Naive thymus-derived CD4-positive, alpha-beta T cell (primary cell): ENCODE measurements at regions of chr22 and their contacts with region 1.

Region 1: DNA sequence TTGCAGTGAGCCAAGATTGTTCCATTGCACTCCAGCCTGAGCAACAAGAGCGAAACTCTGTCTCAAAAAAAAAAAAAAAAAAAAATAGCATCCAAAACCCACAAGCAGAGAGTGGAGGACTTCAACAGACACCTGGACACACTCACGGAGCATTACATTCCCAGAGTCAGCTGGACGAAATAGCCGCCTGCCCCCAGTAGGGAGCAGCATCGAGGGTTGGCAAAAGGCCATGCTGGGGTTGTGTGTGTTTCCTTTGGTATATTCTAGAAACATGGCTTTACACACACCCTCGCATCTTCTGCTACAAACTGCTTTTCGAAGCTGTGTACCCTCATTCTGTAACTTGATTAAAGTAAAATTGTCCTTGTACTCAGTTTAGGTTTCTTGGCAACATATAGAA is 5.3 kb downstream of the ADA2 start:
- DNase-seq: peak; percentile 27 to 67 (median 51)
- ATAC-seq: peak; percentile 68
- H3K4me3 ChIP-seq: no peak overlapping the region
- H3K4me3 Mint-ChIP-seq: peak overlapping the region in 6 of 10 donors; percentile 6 to 89 (median 56)
- H3K27ac ChIP-seq: peak overlapping the region; percentile 44
- H3K27ac Mint-ChIP-seq: peak overlapping the region in 7 of 9 donors; percentile 67 to 100 (median 88)
- H3K4me1 ChIP-seq: peaks cover 9 to 15% of the 10 kb centered on the region in 2 donors
- H3K4me1 Mint-ChIP-seq: peaks cover 35 to 66% (median 48%) of the 10 kb centered on the region in 7 donors
- H3K27me3 ChIP-seq: no peaks in the 10 kb centered on the region
- H3K27me3 Mint-ChIP-seq: no peaks in the 10 kb centered on the region

Region 2: DNA sequence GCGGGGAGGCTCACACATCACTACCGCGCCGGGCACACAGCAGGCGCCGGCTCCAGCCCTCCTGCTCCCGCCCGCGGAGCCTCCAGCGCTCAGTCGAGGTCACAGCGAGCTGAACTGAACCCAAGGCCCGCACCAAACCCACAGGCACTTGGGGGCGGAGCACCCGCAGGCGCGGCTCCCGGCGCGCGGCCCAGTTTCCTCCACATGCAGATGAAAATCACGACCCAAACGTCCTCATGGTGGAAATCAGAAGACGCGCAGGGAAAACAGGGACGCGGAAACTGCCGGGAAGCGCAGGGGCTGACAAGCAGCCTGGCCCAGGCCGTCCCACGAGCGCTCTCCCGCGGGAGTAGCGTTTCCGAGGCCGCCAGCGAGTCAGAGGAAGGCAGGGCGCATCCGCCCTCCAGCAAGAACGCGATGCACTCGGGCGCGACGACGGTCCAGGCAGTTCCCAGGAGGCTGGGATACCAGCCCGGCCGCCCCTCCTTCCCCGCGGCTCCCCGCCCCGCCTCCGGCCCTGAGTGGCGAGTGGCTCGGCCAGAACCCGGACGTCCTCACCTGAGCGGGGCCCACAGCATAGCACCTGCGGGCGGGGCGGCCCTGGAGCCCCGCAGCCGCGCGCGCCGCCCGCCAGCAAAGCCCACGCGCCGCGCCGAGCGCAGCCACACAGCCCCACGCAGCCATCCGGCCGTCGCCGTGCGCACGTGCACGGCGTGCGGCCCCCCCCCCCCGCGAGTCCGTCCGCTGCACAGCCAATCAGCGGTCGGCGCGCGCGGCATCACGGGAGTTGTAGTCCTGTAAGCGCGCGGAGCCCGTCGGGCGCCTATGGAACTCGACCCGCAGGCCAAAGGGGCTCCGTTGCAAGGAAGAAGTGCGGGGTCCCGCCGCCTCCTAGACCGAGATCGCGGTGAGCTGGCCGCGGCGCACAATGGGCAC is 55.1 kb before region 1 on chr22 and contains the start of gene HDHD5:
- CTCF ChIA-PET with region 1: no interaction called
- POLR2A ChIA-PET with region 1: interaction called, 3 read pairs
- intact Hi-C with region 1: loop called in 1 of 2 experiments (anchors 5 kb)
- DNase-seq: peak; percentile 71 to 87 (median 84)
- ATAC-seq: peak; percentile 96
- H3K4me3 ChIP-seq: peak within 1 kb of the TSS; percentile 79
- H3K4me3 Mint-ChIP-seq: peak within 1 kb of the TSS; percentile 80 to 91 (median 88)
- H3K27ac ChIP-seq: peak within 1 kb of the TSS; percentile 79
- H3K27ac Mint-ChIP-seq: peak within 1 kb of the TSS in 8 of 9 donors; percentile 36 to 88 (median 76)
- H3K4me1 ChIP-seq: peaks cover 18 to 26% of the 10 kb centered on the region in 2 donors
- H3K4me1 Mint-ChIP-seq: peaks cover 18 to 48% (median 36%) of the 10 kb centered on the region in 7 donors
- H3K27me3 ChIP-seq: no peaks in the 10 kb centered on the region
- H3K27me3 Mint-ChIP-seq: no peaks in the 10 kb centered on the region
- total RNA-seq, gene HDHD5: 18.8 to 50.9 (median 26.2) TPM

Region 3: DNA sequence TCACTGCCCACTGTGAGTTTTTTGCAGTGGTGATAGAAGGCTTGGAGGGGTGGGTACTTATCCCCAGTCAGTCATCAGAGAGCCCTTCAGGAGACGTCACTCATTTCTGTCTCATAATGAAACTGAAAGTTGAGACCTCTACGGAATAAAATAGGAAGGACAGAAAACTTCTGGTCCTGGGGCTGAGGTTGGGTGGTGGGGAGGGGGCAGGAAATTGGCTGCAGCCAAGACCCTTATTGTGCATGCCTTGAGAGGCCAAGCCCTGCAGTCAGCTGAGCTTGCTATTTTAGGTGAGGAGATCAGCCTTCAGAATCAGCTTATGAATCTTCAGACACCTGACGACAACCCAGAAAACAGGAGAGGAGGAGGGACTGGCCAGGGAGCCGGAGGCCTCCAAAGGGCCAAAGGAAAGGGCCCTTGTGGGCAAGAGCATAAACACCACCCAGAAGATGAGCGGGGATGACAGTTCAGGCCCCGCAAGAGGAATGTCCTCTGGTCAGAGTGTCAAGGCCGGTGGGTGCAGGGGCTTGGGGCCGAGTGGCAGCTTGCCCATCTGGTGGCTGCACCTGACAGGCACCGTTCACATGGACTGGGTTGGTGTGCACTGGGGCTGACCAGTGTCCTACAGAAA is 23.2 kb after region 1 on chr22:
- CTCF ChIA-PET with region 1: no interaction called
- POLR2A ChIA-PET with region 1: interaction called, 6 read pairs
- intact Hi-C with region 1: loop called (anchors 1 kb)
- DNase-seq: peak in 6 of 9 donors; percentile 31 to 50 (median 40)
- ATAC-seq: peak; percentile 80
- H3K4me3 ChIP-seq: peak overlapping the region; percentile 61
- H3K4me3 Mint-ChIP-seq: peak overlapping the region; percentile 78 to 96 (median 91)
- H3K27ac ChIP-seq: peak overlapping the region; percentile 73
- H3K27ac Mint-ChIP-seq: peak overlapping the region; percentile 92 to 99 (median 97)
- H3K4me1 ChIP-seq: peaks cover 0 to 12% of the 10 kb centered on the region in 2 donors
- H3K4me1 Mint-ChIP-seq: peaks cover 8 to 27% (median 11%) of the 10 kb centered on the region in 7 donors
- H3K27me3 ChIP-seq: no peaks in the 10 kb centered on the region
- H3K27me3 Mint-ChIP-seq: no peaks in the 10 kb centered on the region

Region 4: GRCh38 chr22:17266251-17266971 is 52.4 kb after region 1 on chr22:
- CTCF ChIA-PET with region 1: interaction called, 4 read pairs
- POLR2A ChIA-PET with region 1: interaction called, 17 read pairs
- intact Hi-C with region 1: no loop called
- DNase-seq: peak in 5 of 9 donors; percentile 30 to 40 (median 33)
- ATAC-seq: peak; percentile 37
- H3K4me3 ChIP-seq: no peak overlapping the region
- H3K4me3 Mint-ChIP-seq: peak overlapping the region in 9 of 10 donors; percentile 5 to 75 (median 46)
- H3K27ac ChIP-seq: peak overlapping the region; percentile 39
- H3K27ac Mint-ChIP-seq: peak overlapping the region; percentile 71 to 91 (median 78)
- H3K4me1 ChIP-seq: peaks cover 0 to 11% of the 10 kb centered on the region in 2 donors
- H3K4me1 Mint-ChIP-seq: peaks cover 0 to 43% (median 29%) of the 10 kb centered on the region in 7 donors
- H3K27me3 ChIP-seq: no peaks in the 10 kb centered on the region
- H3K27me3 Mint-ChIP-seq: no peaks in the 10 kb centered on the region

Region 5: DNA sequence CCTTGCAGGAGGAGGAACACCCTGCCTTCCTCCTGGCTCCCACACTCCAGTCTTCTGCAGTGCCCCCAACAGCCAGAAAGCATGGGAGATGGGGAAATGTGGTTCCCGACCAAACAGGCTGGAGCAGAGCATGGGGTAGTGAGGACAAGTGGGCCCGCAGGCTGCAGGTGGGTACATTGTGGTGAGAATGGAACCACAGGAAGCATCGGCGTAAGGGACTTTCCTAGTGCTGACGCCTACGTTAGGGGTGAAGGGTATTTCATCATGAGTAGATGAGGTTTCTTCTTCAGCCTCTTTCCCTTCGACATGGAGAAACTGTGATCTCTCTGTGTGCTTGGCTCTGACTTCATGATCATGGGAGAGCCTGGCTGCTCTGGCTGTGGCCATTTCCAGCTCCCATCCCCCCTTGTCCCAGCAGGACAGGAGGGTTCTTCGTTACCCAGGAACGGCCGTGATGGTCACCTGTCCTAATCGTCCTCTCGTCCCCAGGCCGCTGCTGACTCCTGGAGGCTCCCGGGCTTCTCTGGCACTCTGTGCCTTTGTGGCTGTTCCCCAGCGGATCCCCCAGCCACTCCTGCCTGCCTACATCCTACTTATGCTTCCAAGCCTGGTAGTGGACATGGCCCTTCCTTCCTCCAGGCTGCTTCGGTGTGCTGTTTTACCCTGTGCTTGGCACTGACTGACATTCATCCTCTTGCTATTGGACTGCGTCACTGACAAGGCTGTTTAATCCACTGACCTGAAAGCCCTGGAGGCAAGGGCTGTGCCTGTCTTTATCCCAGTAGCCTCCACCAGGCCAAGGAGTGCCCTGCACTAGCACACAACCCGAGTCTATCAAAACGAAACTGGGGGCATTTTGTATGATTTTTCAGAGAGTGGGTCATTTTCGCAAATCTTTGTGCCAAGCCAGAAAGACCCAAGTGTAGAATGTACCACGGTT is 90.1 kb after region 1 on chr22:
- CTCF ChIA-PET with region 1: no interaction called
- POLR2A ChIA-PET with region 1: no interaction called
- intact Hi-C with region 1: loop called in 1 of 2 experiments (anchors 1 kb)
- DNase-seq: peak; percentile 9 to 78 (median 56)
- ATAC-seq: peak; percentile 97
- H3K4me3 ChIP-seq: peak overlapping the region; percentile 27
- H3K4me3 Mint-ChIP-seq: peak overlapping the region; percentile 7 to 86 (median 58)
- H3K27ac ChIP-seq: peak overlapping the region; percentile 51
- H3K27ac Mint-ChIP-seq: peak overlapping the region; percentile 36 to 95 (median 87)
- H3K4me1 ChIP-seq: peaks cover 12 to 14% of the 10 kb centered on the region in 2 donors
- H3K4me1 Mint-ChIP-seq: peaks cover 6 to 46% (median 28%) of the 10 kb centered on the region in 7 donors
- H3K27me3 ChIP-seq: no peaks in the 10 kb centered on the region
- H3K27me3 Mint-ChIP-seq: peaks cover 0 to 2% (median 0%) of the 10 kb centered on the region in 5 donors

Region 6: GRCh38 chr22:17501679-17502285 is 287.8 kb after region 1 on chr22:
- CTCF ChIA-PET with region 1: interaction called, 5 read pairs
- POLR2A ChIA-PET with region 1: no interaction called
- intact Hi-C with region 1: loop called (anchors 1 kb)
- DNase-seq: peak in 7 of 9 donors; percentile 39 to 75 (median 61)
- ATAC-seq: peak; percentile 87
- H3K4me3 ChIP-seq: no peak overlapping the region
- H3K4me3 Mint-ChIP-seq: no peak overlapping the region
- H3K27ac ChIP-seq: no peak overlapping the region
- H3K27ac Mint-ChIP-seq: no peak overlapping the region
- H3K4me1 ChIP-seq: no peaks in the 10 kb centered on the region
- H3K4me1 Mint-ChIP-seq: peaks cover 0 to 3% (median 0%) of the 10 kb centered on the region in 7 donors
- H3K27me3 ChIP-seq: no peaks in the 10 kb centered on the region
- H3K27me3 Mint-ChIP-seq: peaks cover 0 to 9% (median 5%) of the 10 kb centered on the region in 5 donors